Colonic mucosa (tissue), 4 donors: ENCODE measurements at regions of chrX and their contacts with region 1.

Region 1: DNA sequence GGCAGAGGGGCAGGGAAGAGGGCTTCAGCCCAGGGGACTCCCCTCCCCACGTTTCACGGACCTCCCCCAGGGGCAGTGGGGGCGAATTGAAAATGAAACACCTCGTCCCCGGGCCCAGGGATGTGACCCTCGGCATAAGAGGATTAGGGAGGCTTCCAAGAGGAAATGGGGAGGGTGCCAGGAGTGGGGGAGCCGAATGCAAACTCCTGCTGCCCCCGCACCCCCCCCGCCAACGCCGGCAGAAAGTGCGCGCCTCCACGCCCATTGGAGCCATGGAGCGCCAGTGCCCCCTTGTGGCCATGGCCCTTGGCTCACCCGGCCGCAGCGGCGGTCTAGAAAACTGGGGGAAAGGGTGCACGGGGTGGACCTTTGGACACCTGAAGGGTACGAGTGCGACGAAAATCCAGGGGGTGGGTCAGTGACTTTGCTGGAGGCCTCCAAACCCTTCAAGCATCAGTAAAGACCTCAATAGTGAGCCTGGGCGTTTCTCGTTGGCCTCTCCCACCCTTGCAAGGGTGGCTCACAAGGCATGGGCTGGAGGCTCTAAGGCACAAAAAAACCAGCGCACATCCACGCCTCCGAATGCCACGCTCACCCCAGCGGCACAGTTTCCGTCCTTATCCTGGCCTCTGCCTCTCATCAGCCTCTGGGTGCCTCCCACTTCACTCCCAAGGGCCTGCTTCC is 120.8 kb upstream of the PJA1 start:
- DNase-seq: peak; percentile 63
- H3K4me3 ChIP-seq: peak overlapping the region; percentile 23
- H3K27ac ChIP-seq: no peak overlapping the region
- H3K4me1 ChIP-seq: no peaks in the 10 kb centered on the region
- H3K27me3 ChIP-seq: no peaks in the 10 kb centered on the region
- CTCF ChIP-seq: peak; percentile 81

Region 2: DNA sequence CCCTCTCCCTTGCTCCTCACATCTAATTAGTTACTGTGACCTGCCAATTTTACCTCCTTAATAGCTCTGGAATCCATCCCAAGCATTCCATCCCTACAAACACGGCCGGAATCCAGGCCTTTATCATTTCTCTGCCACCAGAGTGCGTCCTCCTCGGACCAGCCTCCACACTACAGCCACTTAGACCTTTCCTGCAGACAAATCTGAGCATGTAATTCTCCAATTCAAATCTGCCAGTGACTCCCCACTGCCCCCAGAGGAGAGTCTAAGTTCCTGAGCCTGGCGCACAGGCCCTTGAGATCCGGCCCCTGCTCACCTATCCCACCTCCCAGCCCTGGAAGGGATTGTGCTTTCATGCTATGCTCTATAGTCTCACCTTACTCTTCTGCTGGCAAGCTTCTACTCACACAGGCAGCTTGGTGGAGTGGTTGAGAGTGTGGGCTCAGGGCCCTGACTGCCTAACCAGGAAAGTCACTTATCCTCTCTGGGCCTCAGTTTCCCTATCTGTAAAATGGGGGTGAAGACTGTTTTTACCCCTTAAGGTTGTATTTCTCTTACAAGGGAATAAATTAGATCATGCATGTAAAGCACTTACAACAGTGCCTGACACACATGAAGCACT is 152.0 kb before region 1 on chrX:
- intact Hi-C with region 1: loop called (anchors 10 kb)
- DNase-seq: peak; percentile 21
- H3K4me3 ChIP-seq: no peak overlapping the region
- H3K27ac ChIP-seq: no peak overlapping the region
- H3K4me1 ChIP-seq: no peaks in the 10 kb centered on the region
- H3K27me3 ChIP-seq: peaks cover 4% of the 10 kb centered on the region
- CTCF ChIP-seq: peak; percentile 20